Psoas muscle (tissue), 8 donors: ENCODE measurements at regions of chr10 and their contacts with region 1.

Region 1: DNA sequence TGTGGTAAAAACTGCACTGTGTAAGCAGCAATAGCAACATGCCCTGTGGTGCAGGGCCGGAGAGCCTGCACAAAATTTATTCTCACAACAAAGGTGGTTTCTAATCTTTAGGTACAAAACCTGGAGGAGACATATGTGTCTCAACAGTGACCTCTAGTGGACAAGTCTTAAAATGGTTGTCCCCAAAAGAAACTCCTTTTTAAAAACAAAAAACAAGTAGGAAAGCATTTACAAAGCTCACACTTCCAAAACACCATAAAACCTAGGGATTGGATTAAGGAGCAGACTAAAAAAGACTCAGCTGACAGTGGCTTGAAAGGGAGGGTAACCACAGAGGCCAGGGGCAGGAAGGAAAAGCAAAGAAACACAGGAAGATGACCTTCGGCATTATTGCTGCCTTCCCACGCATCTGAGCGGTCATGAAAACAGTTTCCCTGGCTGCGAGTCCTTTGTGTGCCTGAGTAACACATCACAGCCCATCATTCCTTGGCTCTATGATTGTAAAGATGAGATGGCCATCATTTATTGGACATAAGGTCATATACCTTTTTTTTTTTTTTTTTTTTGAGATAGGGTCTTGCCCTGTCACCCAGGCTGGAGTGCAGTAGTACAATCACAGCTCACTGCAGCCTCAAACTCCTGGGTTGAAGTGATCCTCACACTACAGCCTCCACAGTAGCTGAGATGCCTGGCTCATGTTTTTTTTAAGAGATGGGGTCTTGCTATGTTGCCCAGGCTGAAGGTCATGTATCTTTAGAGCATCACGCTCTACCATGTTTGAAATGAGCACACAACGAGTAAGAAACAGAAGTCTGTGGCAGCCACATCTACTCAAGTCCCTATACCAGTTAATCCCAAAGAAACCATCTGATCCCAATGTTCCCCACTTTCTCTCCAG is 39.5 kb downstream of the RSU1 start:
- DNase-seq: no peak
- ATAC-seq: peak in 2 of 4 donors; percentile 32 to 53
- H3K4me3 ChIP-seq: no peak overlapping the region
- H3K27ac ChIP-seq: no peak overlapping the region
- H3K4me1 ChIP-seq: peaks cover 30% of the 10 kb centered on the region
- H3K27me3 ChIP-seq: no peaks in the 10 kb centered on the region
- CTCF ChIP-seq: peak; percentile 71

Region 2: GRCh38 chr10:15901889-15902288 is 875.8 kb before region 1 on chr10:
- intact Hi-C with region 1: loop called (anchors 10 kb)
- DNase-seq: no peak
- ATAC-seq: no peak
- H3K4me3 ChIP-seq: no peak overlapping the region
- H3K27ac ChIP-seq: no peak overlapping the region
- H3K4me1 ChIP-seq: no peaks in the 10 kb centered on the region
- H3K27me3 ChIP-seq: peaks cover 0 to 7% (median 0%) of the 10 kb centered on the region in 3 donors
- CTCF ChIP-seq: no peak

Region 3: GRCh38 chr10:16116404-16117304 is 661.1 kb before region 1 on chr10:
- intact Hi-C with region 1: loop called in 1 of 2 experiments (anchors 5 kb)
- DNase-seq: no peak
- ATAC-seq: no peak
- H3K4me3 ChIP-seq: no peak overlapping the region
- H3K27ac ChIP-seq: no peak overlapping the region
- H3K4me1 ChIP-seq: no peaks in the 10 kb centered on the region
- H3K27me3 ChIP-seq: no peaks in the 10 kb centered on the region
- CTCF ChIP-seq: peak; percentile 23

Region 4: DNA sequence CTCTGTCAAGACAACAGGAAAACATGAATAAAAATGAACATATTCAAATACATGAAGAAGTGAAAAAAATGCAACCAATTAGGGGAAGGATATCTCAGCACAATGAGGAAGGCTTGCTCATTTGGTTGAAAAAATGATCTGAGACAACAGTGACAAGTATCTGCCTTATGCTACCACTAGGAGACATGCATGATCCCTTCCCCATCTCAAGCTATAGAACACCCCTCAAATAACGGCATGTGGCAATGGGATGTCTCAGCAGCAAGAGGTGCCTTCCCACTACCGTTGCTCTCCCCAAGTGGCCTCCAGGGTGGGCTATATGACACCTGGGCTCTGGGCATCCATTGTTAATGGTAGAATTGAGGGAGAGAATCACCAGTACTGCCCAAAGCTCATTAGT is 137.6 kb after region 1 on chr10:
- intact Hi-C with region 1: no loop called
- DNase-seq: no peak
- ATAC-seq: no peak
- H3K4me3 ChIP-seq: no peak overlapping the region
- H3K27ac ChIP-seq: no peak overlapping the region
- H3K4me1 ChIP-seq: no peaks in the 10 kb centered on the region
- H3K27me3 ChIP-seq: no peaks in the 10 kb centered on the region
- CTCF ChIP-seq: no peak